CD8-positive, alpha-beta T cell (primary cell): ENCODE measurements at regions of chr2 and their contacts with region 1.

Region 1: GRCh38 chr2:44361330-44362206 is at the starts of genes CAMKMT and PREPL:
- DNase-seq: peak; percentile 97 to 99 (median 98)
- ATAC-seq: peak; percentile 88
- H3K4me3 ChIP-seq: peak within 1 kb of the TSS; percentile 74 to 81
- H3K4me3 Mint-ChIP-seq: peak within 1 kb of the TSS; percentile 98
- H3K27ac ChIP-seq: peak within 1 kb of the TSS; percentile 93 to 98
- H3K27ac Mint-ChIP-seq: peak within 1 kb of the TSS; percentile 100
- H3K4me1 ChIP-seq: peaks cover 24% of the 10 kb centered on the region
- H3K4me1 Mint-ChIP-seq: peaks cover 61% of the 10 kb centered on the region
- H3K27me3 ChIP-seq: no peaks in the 10 kb centered on the region
- H3K27me3 Mint-ChIP-seq: no peaks in the 10 kb centered on the region
- CTCF ChIP-seq: no peak
- total RNA-seq, gene CAMKMT: 12.4 to 13.0 TPM
- total RNA-seq, gene PREPL: 26.6 to 27.9 TPM

Region 2: DNA sequence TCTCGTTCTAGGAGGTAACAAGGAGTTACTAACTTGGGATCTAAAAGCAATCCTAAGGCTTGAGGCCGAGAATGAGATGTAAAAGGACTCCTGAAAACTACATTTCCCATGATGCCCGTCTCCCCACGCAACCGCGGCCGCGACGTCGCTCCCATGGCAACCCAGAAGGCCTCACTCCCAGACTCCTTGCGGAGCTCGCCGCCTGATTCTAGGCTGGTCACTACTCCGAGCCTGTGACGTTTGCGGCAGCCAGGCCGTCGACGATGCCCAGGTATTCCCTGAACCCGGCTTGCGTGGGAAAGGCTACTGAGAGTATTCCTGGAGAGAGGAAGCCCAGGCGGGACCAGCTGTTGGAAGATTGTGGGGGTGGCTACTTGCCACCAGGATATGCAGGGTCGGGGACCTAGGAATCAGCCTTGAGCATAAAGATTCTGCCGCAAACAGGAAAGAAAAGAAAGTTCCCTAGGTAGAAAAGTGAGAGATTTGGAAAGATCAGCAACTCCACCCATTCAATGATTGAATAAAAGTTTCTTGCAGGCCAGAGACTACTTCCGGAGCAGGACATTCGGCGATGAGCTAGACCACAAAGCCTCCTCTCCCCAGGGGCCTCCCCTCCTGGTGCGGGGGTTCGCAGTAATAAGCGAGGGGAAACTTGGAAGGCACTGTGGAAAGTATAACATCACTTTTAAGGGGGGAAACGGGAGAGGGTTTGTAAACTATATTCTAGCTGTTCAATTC is 587.5 kb before region 1 on chr2 and contains the start of gene DYNC2LI1:
- CTCF ChIA-PET with region 1: no interaction called
- POLR2A ChIA-PET with region 1: no interaction called
- intact Hi-C with region 1: loop called in 1 of 2 experiments (anchors 10 kb)
- DNase-seq: peak; percentile 38 to 86 (median 70)
- ATAC-seq: peak; percentile 92
- H3K4me3 ChIP-seq: peak within 1 kb of the TSS; percentile 89 to 97
- H3K4me3 Mint-ChIP-seq: peak within 1 kb of the TSS; percentile 96
- H3K27ac ChIP-seq: peak within 1 kb of the TSS; percentile 48 to 54
- H3K27ac Mint-ChIP-seq: peak within 1 kb of the TSS; percentile 80
- H3K4me1 ChIP-seq: no peaks in the 10 kb centered on the region
- H3K4me1 Mint-ChIP-seq: peaks cover 15% of the 10 kb centered on the region
- H3K27me3 ChIP-seq: no peaks in the 10 kb centered on the region
- H3K27me3 Mint-ChIP-seq: peaks cover 8% of the 10 kb centered on the region
- CTCF ChIP-seq: no peak
- total RNA-seq, gene DYNC2LI1: 1.4 to 1.8 TPM

Region 3: DNA sequence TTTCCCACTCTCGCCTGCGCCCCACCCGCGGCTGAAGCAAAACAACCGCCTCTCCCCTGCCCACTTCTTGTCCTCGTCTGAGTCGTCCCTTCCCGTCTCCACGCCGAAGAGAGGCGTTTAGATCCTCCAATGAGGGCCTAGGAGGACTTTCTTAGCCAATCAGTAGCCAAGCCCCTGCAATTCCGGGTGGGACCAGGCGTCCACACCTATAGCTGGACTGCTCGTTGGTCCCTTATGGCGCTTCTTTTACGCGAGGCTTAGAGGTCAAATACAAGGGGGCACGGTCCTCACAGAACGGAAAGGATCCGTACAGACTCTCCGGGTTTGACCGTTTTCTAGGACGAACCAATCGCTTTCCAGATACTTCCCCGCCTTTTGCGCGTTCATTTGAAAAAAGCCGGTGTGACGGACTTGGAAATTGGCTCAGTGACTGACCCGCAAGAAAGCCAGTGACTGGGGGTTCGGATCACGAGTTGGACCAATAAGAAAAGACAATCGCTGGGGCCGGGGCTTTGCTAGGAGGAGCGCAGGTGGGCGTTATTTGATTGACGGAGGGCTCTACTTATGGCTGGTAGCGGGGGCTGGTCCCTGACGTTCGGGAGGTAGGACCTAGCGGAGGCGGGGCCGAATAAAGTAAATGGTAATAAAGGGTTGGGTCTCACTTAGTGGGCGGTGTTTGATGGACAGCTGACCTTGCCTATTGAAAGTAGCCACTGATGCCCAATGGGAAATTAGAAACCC is 193.5 kb before region 1 on chr2:
- CTCF ChIA-PET with region 1: no interaction called
- POLR2A ChIA-PET with region 1: interaction called, 20 read pairs
- intact Hi-C with region 1: loop called (anchors 1 kb)
- DNase-seq: peak; percentile 92 to 100 (median 96)
- ATAC-seq: peak; percentile 77
- H3K4me3 ChIP-seq: peak overlapping the region; percentile 57 to 79
- H3K4me3 Mint-ChIP-seq: peak overlapping the region; percentile 99
- H3K27ac ChIP-seq: peak overlapping the region; percentile 95 to 97
- H3K27ac Mint-ChIP-seq: peak overlapping the region; percentile 99
- H3K4me1 ChIP-seq: peaks cover 22% of the 10 kb centered on the region
- H3K4me1 Mint-ChIP-seq: peaks cover 38% of the 10 kb centered on the region
- H3K27me3 ChIP-seq: no peaks in the 10 kb centered on the region
- H3K27me3 Mint-ChIP-seq: no peaks in the 10 kb centered on the region
- CTCF ChIP-seq: no peak

Region 4: DNA sequence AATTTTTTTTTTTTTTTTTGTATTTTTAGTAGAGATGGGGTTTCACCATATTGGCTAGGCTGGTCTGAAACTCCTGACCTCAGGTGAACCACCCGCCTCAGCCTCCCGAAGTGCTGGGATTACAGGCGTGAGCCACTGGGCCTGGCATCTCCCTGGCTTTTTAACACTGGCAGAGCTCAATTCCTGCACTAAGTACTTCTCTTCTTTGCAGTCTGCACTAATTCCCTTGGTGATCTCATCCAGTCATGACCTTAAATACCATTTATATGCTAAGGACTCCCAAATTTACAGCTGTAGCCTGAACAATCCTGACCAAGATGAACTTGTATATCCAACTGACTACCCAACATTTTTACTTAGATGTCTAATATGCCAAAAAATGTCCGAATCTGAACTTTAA is 10.5 kb before region 1 on chr2:
- CTCF ChIA-PET with region 1: interaction called, 11 read pairs
- POLR2A ChIA-PET with region 1: interaction called, 10 read pairs
- intact Hi-C with region 1: no loop called
- DNase-seq: no peak
- ATAC-seq: no peak
- H3K4me3 ChIP-seq: no peak overlapping the region
- H3K4me3 Mint-ChIP-seq: no peak overlapping the region
- H3K27ac ChIP-seq: no peak overlapping the region
- H3K27ac Mint-ChIP-seq: no peak overlapping the region
- H3K4me1 ChIP-seq: no peaks in the 10 kb centered on the region
- H3K4me1 Mint-ChIP-seq: peaks cover 42% of the 10 kb centered on the region
- H3K27me3 ChIP-seq: no peaks in the 10 kb centered on the region
- H3K27me3 Mint-ChIP-seq: no peaks in the 10 kb centered on the region
- CTCF ChIP-seq: no peak

Region 5: GRCh38 chr2:45578056-45578809 is 1216.7 kb after region 1 on chr2:
- CTCF ChIA-PET with region 1: no interaction called
- POLR2A ChIA-PET with region 1: no interaction called
- intact Hi-C with region 1: loop called in 1 of 2 experiments (anchors 10 kb)
- DNase-seq: peak in 4 of 9 experiments; percentile 11 to 69 (median 47)
- ATAC-seq: peak; percentile 73
- H3K4me3 ChIP-seq: no peak overlapping the region
- H3K4me3 Mint-ChIP-seq: no peak overlapping the region
- H3K27ac ChIP-seq: no peak overlapping the region
- H3K27ac Mint-ChIP-seq: peak overlapping the region; percentile 16
- H3K4me1 ChIP-seq: no peaks in the 10 kb centered on the region
- H3K4me1 Mint-ChIP-seq: peaks cover 1% of the 10 kb centered on the region
- H3K27me3 ChIP-seq: no peaks in the 10 kb centered on the region
- H3K27me3 Mint-ChIP-seq: no peaks in the 10 kb centered on the region
- CTCF ChIP-seq: peak; percentile 54